A549 (cell line): ENCODE measurements at regions of chr11 and their contacts with region 1.

Region 1: DNA sequence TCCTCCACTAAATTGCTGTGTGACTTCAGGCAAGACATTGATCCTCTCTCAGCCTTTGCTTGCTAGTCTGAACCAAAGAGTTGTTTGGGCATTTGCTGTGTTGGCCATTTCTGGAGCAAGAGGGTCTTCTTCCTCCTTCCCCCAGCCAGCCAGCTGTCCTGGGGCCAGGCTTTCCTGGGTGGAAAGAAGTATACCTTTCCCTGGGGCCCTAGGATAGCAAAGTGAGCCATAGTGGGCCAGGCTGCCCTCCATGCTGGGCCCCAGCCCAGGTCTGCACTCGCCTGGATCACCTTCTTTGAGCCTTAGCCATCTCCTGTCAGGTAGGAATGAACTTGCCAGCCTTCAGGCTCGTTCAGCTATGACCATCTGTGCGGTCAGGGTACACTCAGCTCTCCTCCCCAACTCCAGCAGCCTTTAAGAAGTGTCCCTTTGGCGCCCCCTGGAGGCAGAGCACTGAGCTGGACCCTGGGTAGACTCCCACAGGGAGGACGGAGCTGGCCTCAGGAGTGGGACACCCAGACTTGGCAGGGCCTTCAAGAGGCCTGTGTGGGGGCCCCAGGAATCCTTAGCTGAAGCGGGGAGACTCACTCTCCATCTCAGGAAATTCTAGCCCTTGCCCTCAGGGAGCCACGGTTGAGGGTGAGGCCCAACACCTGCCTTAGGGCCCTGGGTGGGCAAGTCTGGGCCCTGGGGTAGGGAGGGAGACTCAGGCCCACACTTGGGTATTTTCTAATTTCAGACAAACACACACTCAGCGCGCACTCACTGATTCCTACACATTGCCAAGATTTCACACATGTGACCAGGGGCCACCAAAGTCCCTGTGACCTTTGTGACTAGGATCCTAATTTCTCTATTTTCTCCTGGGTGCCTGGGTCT is 35.6 kb upstream of the TPBGL start:
- DNase-seq: peak; percentile 75 to 84
- ATAC-seq: peak; percentile 85 to 99
- H3K4me3 ChIP-seq: no peak overlapping the region
- H3K27ac ChIP-seq: no peak overlapping the region
- H3K4me1 ChIP-seq: no peaks in the 10 kb centered on the region
- CTCF ChIP-seq: peak; percentile 85
- EP300 ChIP-seq: no peak
- POLR2A ChIP-seq: no peak
- RAD21 ChIP-seq: peak; percentile 90 to 91

Region 2: GRCh38 chr11:74929431-74930363 is 275.2 kb before region 1 on chr11:
- CTCF ChIA-PET with region 1: interaction called, 24 read pairs
- POLR2A ChIA-PET with region 1: no interaction called
- DNase-seq: peak; percentile 60 to 91
- ATAC-seq: peak; percentile 97 to 99
- H3K4me3 ChIP-seq: no peak overlapping the region
- H3K27ac ChIP-seq: no peak overlapping the region
- H3K4me1 ChIP-seq: peaks cover 9% of the 10 kb centered on the region; the same call in 2 of the 3 replicates
- CTCF ChIP-seq: peak; percentile 92
- EP300 ChIP-seq: no peak
- POLR2A ChIP-seq: no peak
- RAD21 ChIP-seq: peak; percentile 81 to 90

Region 3: GRCh38 chr11:75022759-75023396 is 182.0 kb before region 1 on chr11:
- CTCF ChIA-PET with region 1: interaction called, 177 read pairs
- POLR2A ChIA-PET with region 1: interaction called, 5 read pairs
- DNase-seq: peak; percentile 81 to 86
- ATAC-seq: peak; percentile 96 to 99
- H3K4me3 ChIP-seq: no peak overlapping the region
- H3K27ac ChIP-seq: no peak overlapping the region
- H3K4me1 ChIP-seq: no peaks in the 10 kb centered on the region
- CTCF ChIP-seq: peak; percentile 95
- EP300 ChIP-seq: no peak
- POLR2A ChIP-seq: no peak
- RAD21 ChIP-seq: peak; percentile 91 to 98

Region 4: DNA sequence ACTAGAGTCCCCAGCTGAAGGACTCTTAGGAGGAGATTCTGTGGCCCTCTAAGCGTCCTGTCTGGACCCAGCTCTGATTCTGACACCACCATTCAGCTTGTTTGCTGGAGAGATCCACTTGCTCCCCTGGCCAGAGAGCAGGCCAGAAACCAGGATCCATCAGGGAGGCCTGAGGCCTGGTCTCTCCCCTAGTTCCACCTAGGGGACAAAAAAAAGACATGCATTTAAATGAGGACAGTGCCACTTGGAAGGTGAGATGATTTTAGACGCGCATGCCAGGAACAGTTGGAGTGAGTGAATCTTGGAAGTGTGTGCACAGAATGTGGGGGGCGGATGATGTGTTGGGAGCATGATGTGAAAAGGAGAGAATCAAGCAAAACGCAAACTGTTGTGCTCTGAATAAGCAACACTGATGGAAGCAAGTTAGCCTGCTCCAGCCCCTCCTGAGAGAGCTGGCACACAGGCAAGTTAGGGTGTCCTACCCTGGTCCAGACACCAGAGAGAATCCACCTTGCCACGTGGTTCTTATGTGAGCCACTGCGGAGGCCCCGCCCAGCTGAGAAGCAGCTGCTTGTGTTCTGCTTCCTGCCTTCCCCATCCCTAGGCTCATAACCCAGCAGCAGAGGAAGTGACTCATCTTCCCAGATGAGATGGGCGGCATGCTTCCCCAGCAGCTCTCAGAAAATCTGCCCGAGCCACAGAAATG is 62.1 kb before region 1 on chr11:
- CTCF ChIA-PET with region 1: interaction called, 291 read pairs
- POLR2A ChIA-PET with region 1: interaction called, 3 read pairs
- DNase-seq: peak; percentile 83 to 93
- ATAC-seq: peak; percentile 82 to 87
- H3K4me3 ChIP-seq: no peak overlapping the region
- H3K27ac ChIP-seq: peak overlapping the region; percentile 63 to 77
- H3K4me1 ChIP-seq: peaks cover 11% of the 10 kb centered on the region
- CTCF ChIP-seq: no peak
- EP300 ChIP-seq: no peak
- POLR2A ChIP-seq: 0 out of 2 replicates have a peak, but pooled peaks have one; percentile 8
- RAD21 ChIP-seq: no peak

Region 5: GRCh38 chr11:75174781-75175370 is 30.0 kb before region 1 on chr11:
- CTCF ChIA-PET with region 1: interaction called, 11 read pairs
- POLR2A ChIA-PET with region 1: no interaction called
- DNase-seq: no peak
- ATAC-seq: peak in 1 of 2 experiments; percentile 53; a peak in 1 of 6 replicates
- H3K4me3 ChIP-seq: no peak overlapping the region
- H3K27ac ChIP-seq: no peak overlapping the region
- H3K4me1 ChIP-seq: no peaks in the 10 kb centered on the region
- CTCF ChIP-seq: no peak
- EP300 ChIP-seq: no peak
- POLR2A ChIP-seq: no peak
- RAD21 ChIP-seq: no peak

Region 6: GRCh38 chr11:75223954-75224643 is 19.2 kb after region 1 on chr11:
- CTCF ChIA-PET with region 1: interaction called, 18 read pairs
- POLR2A ChIA-PET with region 1: no interaction called
- DNase-seq: peak; percentile 21 to 29
- ATAC-seq: peak; percentile 92 to 95
- H3K4me3 ChIP-seq: no peak overlapping the region
- H3K27ac ChIP-seq: no peak overlapping the region
- H3K4me1 ChIP-seq: no peaks in the 10 kb centered on the region
- CTCF ChIP-seq: no peak
- EP300 ChIP-seq: no peak
- POLR2A ChIP-seq: no peak
- RAD21 ChIP-seq: no peak

Region 7: GRCh38 chr11:75717608-75718418 is 512.9 kb after region 1 on chr11 and contains the start of gene MOGAT2:
- CTCF ChIA-PET with region 1: no interaction called
- POLR2A ChIA-PET with region 1: no interaction called
- DNase-seq: no peak
- ATAC-seq: no peak
- H3K4me3 ChIP-seq: no peak within 1 kb of the TSS
- H3K27ac ChIP-seq: no peak within 1 kb of the TSS
- H3K4me1 ChIP-seq: no peaks in the 10 kb centered on the region
- CTCF ChIP-seq: no peak
- EP300 ChIP-seq: no peak
- POLR2A ChIP-seq: no peak
- RAD21 ChIP-seq: no peak
- polyA plus RNA-seq, gene MOGAT2: not detected in 2 replicates